ENCODE measurements at regions of chr12 and their contacts with region 1.

Region 1: DNA sequence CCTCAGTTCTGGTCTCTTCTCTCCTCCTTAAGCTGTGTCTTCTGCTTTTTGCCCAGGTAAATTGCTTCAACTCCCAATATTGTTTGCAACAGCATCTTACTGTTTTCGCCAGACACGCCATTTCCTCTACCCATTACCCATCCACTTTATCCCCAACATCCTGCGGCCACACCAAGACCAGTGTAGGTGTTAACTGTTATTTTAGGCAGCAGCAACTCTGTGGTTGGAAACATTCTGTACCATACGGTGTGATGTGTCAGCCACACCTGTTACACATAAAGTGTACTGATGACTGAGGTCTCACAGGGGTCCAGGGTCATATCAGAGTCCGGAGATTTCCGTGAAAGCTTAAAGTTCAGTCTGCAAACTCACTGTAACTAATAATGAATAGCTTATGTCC is 21.8 kb upstream of the KLRD1 start:
- DNase-seq: peak; percentile 52 to 56
- ATAC-seq: peak; percentile 72 to 78 (median 72)
- H3K4me3 ChIP-seq: no peak overlapping the region
- H3K4me3 Mint-ChIP-seq: peak overlapping the region; percentile 78
- H3K27ac ChIP-seq: peak overlapping the region; percentile 70
- H3K27ac Mint-ChIP-seq: peak overlapping the region; percentile 80 to 89
- H3K4me1 ChIP-seq: peaks cover 46% of the 10 kb centered on the region
- H3K4me1 Mint-ChIP-seq: peaks cover 52 to 53% of the 10 kb centered on the region in 2 donors
- H3K27me3 ChIP-seq: no peaks in the 10 kb centered on the region
- H3K27me3 Mint-ChIP-seq: no peaks in the 10 kb centered on the region
- CTCF ChIP-seq: no peak

Region 2: DNA sequence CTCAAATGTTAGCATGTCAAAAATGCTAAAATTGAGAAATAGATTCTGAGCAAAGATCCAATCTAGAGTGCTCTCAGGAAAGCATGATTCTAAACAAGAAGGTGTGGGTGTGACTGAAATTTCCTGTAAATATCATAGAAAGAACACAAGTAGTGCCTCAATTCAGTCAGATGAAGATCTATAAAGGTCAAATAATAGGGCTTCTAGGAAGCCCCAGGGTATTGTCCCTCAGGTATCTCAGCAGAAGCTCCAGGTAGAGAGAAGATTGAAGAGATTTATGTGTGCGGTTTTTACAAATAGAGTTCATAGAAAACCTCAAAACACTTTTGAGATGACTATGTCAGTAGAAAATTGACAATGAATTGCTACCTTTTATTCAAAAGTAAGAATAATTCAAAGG is 34.7 kb after region 1 on chr12:
- intact Hi-C with region 1: loop called (anchors 5 kb)
- DNase-seq: no peak
- ATAC-seq: no peak
- H3K4me3 ChIP-seq: no peak overlapping the region
- H3K4me3 Mint-ChIP-seq: peak overlapping the region; percentile 51
- H3K27ac ChIP-seq: no peak overlapping the region
- H3K27ac Mint-ChIP-seq: peak overlapping the region; percentile 82 to 97
- H3K4me1 ChIP-seq: peaks cover 41% of the 10 kb centered on the region
- H3K4me1 Mint-ChIP-seq: peaks cover 85 to 90% of the 10 kb centered on the region in 2 donors
- H3K27me3 ChIP-seq: no peaks in the 10 kb centered on the region
- H3K27me3 Mint-ChIP-seq: no peaks in the 10 kb centered on the region
- CTCF ChIP-seq: no peak

Measured in natural killer cell (primary cell).